Mammary epithelial cell (primary cell): ENCODE measurements at regions of chr1 and their contacts with region 1.

Region 1: GRCh38 chr1:154870115-154870571 is at the start of gene KCNN3:
- DNase-seq: peak; percentile 87
- H3K4me3 ChIP-seq: no peak within 1 kb of the TSS
- H3K27ac ChIP-seq: no peak within 1 kb of the TSS
- H3K4me1 ChIP-seq: peaks cover 12% of the 10 kb centered on the region
- H3K27me3 ChIP-seq: peaks cover 8% of the 10 kb centered on the region
- CTCF ChIP-seq: no peak
- total RNA-seq, gene KCNN3: not detected

Region 2: DNA sequence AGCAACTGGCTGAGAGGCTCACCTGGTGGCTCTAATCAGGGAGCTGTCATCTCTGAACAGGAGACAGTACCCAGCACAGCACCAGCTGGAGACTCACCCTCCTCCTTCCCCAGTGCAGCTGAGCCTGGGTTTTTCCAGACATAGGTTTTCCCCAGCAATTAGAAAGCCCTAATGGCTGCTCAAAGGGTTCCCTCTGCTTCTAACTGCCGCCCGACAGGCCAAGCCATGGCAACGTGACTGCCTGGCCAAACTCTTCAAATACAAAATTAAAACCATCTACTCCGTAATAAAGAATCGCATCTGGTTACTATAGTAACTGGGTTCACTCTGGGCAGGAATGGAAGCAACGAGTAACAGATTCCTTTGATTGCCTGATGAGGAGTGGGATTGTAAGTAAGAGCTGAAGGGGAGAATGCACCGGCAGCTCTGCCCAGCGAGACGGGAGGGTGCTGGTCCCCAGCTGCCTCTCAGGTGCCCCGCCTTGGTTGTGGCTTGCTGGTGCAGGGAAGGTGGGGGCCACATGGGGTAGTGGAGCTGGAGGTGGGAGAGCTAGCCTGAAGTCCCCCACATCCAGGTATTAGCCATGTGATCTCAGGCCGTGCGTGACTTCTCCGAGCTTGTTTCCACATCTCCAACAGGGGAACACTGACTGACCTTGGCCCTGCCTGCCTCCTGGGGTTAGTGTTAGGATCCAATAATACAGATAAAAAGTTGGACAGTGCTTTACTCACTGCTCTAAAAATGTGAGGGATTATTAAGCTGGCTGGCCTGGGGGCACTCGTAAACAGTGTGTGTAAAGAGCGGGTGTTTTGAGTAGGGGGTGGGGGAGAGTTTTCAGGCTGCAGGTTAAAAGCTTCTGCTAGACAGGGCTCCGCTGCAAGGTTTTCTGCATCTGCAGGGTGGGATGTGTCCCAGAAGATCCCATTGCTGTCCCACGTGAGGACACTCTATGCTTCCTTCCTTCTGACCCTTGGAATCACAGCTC is 94.2 kb before region 1 on chr1:
- CTCF ChIA-PET with region 1: no interaction called
- dilution Hi-C with region 1: loop called (anchors 5 kb)
- in situ Hi-C with region 1: no loop called
- intact Hi-C with region 1: no loop called
- DNase-seq: no peak
- H3K4me3 ChIP-seq: no peak overlapping the region
- H3K27ac ChIP-seq: no peak overlapping the region
- H3K4me1 ChIP-seq: peaks cover 8% of the 10 kb centered on the region
- H3K27me3 ChIP-seq: no peaks in the 10 kb centered on the region
- CTCF ChIP-seq: no peak

Region 3: GRCh38 chr1:155057788-155058211 is 187.7 kb after region 1 on chr1:
- CTCF ChIA-PET with region 1: no interaction called
- dilution Hi-C with region 1: loop called (anchors 5 kb)
- in situ Hi-C with region 1: no loop called
- intact Hi-C with region 1: no loop called
- DNase-seq: no peak
- H3K4me3 ChIP-seq: no peak overlapping the region
- H3K27ac ChIP-seq: no peak overlapping the region
- H3K4me1 ChIP-seq: peaks cover 24% of the 10 kb centered on the region
- H3K27me3 ChIP-seq: no peaks in the 10 kb centered on the region
- CTCF ChIP-seq: peak; percentile 21 to 23

Region 4: DNA sequence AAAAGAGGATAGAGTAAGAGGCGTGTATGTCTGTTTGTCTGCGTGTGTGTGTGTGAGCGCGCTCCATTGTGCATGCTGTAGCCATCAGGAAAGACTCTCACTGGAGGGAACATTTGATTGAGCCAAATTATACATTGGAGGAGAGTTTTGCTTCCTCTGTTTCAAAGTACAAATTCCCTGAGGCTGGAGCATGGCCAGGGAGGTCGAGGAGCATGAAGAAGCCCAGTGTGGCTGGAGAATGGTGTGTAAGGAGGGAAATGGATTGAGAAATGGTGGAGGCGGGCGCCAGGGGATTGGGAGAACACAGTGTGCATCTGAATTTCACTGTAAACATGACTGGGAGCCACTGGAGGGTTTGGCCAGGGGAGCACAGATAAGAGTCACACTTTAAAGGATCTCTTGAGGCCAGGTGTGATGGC is 235.5 kb after region 1 on chr1:
- CTCF ChIA-PET with region 1: no interaction called
- dilution Hi-C with region 1: no loop called
- in situ Hi-C with region 1: no loop called
- intact Hi-C with region 1: no loop called
- DNase-seq: no peak
- H3K4me3 ChIP-seq: no peak overlapping the region
- H3K27ac ChIP-seq: no peak overlapping the region
- H3K4me1 ChIP-seq: no peaks in the 10 kb centered on the region
- H3K27me3 ChIP-seq: no peaks in the 10 kb centered on the region
- CTCF ChIP-seq: no peak

Region 5: GRCh38 chr1:155379631-155380090 is 509.5 kb after region 1 on chr1:
- CTCF ChIA-PET with region 1: no interaction called
- dilution Hi-C with region 1: no loop called
- in situ Hi-C with region 1: no loop called
- intact Hi-C with region 1: no loop called
- DNase-seq: no peak
- H3K4me3 ChIP-seq: no peak overlapping the region
- H3K27ac ChIP-seq: no peak overlapping the region
- H3K4me1 ChIP-seq: no peaks in the 10 kb centered on the region
- H3K27me3 ChIP-seq: no peaks in the 10 kb centered on the region
- CTCF ChIP-seq: no peak